ENCODE measurements at regions of chr6 and their contacts with region 1.

Region 1: GRCh38 chr6:43263314-43264178 is 20.3 kb downstream of the TTBK1 start:
- DNase-seq: peak; percentile 78
- ATAC-seq: peak; percentile 72 to 89

Region 2: DNA sequence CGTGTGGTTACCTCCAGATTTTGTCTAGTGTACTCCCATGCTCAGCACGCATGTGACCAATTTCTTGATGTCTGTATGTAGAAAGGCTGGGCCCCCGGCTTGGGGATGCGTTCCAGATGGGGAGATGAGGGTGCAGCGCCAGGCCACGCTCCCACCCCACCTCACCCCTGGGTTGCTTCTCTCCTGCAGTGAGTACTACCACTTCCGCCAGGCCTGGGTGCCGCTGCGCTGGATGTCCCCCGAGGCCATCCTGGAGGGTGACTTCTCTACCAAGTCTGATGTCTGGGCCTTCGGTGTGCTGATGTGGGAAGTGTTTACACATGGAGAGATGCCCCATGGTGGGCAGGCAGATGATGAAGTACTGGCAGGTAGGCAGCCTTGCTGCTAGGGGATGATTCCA is 103.9 kb before region 1 on chr6:
- intact Hi-C with region 1: no loop called
- DNase-seq: no peak
- ATAC-seq: no peak

Region 3: GRCh38 chr6:43328528-43328927 is 65.0 kb after region 1 on chr6:
- intact Hi-C with region 1: loop called in 1 of 2 experiments (anchors 1 kb)
- DNase-seq: peak; percentile 35
- ATAC-seq: peak; percentile 93 to 95

Region 4: GRCh38 chr6:43334466-43335095 is 71.0 kb after region 1 on chr6:
- intact Hi-C with region 1: loop called (anchors 2 to 5 kb)
- DNase-seq: no peak
- ATAC-seq: peak; percentile 57 to 60

Region 5: GRCh38 chr6:43496370-43497128 is 233.0 kb after region 1 on chr6:
- intact Hi-C with region 1: loop called in 1 of 2 experiments (anchors 10 kb)
- DNase-seq: no peak
- ATAC-seq: peak in 1 of 2 donors; percentile 19